Calu3 (cell line): ENCODE measurements at regions of chr14 and their contacts with region 1.

Region 1: DNA sequence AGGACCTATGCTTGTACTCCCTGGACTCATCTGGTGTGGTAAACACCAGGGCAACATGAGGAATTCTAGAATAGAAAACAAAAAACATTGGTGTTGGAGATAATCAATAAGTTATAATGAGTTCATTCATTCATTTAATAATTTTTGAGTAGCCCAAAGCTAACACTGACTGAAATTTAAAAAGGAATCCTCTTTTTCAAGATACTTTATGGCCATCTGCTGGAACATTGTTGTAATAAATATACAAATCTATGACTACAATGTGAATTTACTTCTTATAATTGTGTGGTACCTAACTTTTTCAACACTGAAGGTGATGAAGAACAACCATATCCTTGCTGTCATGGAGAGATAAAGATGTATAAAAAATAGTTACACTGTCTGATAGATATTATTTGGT is 687.3 kb upstream of the MIS18BP1 start:
- DNase-seq: no peak
- H3K4me3 Mint-ChIP-seq: no peak overlapping the region
- H3K27ac Mint-ChIP-seq: no peak overlapping the region
- H3K4me1 Mint-ChIP-seq: no peaks in the 10 kb centered on the region
- H3K27me3 Mint-ChIP-seq: no peaks in the 10 kb centered on the region
- CTCF ChIP-seq: no peak

Region 2: GRCh38 chr14:45610318-45610717 is 330.0 kb before region 1 on chr14:
- CTCF ChIA-PET with region 1: no interaction called
- intact Hi-C with region 1: loop called (anchors 5 kb)
- DNase-seq: peak; percentile 4
- H3K4me3 Mint-ChIP-seq: no peak overlapping the region
- H3K27ac Mint-ChIP-seq: no peak overlapping the region
- H3K4me1 Mint-ChIP-seq: no peaks in the 10 kb centered on the region
- H3K27me3 Mint-ChIP-seq: no peaks in the 10 kb centered on the region
- CTCF ChIP-seq: no peak

Region 3: DNA sequence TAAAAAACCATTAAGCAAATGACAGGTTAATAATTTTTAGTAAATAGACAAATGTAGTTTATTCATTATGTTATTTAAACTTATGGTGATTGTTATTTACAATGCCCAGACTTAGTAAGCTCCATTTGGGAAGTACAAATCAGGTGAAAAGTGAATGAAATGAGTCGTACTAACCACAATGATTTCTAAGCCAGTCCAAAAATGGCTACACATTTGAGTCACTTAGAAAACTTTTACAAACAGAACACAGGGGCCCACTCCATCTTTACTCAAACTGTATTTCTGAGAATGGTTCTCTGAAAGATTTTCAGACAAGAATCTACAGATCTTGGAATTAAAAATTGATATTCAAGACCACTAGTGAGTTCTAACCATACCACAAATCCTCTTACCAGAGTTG is 34.0 kb before region 1 on chr14:
- CTCF ChIA-PET with region 1: no interaction called
- intact Hi-C with region 1: no loop called
- DNase-seq: no peak
- H3K4me3 Mint-ChIP-seq: no peak overlapping the region
- H3K27ac Mint-ChIP-seq: no peak overlapping the region
- H3K4me1 Mint-ChIP-seq: no peaks in the 10 kb centered on the region
- H3K27me3 Mint-ChIP-seq: no peaks in the 10 kb centered on the region
- CTCF ChIP-seq: no peak

Region 4: DNA sequence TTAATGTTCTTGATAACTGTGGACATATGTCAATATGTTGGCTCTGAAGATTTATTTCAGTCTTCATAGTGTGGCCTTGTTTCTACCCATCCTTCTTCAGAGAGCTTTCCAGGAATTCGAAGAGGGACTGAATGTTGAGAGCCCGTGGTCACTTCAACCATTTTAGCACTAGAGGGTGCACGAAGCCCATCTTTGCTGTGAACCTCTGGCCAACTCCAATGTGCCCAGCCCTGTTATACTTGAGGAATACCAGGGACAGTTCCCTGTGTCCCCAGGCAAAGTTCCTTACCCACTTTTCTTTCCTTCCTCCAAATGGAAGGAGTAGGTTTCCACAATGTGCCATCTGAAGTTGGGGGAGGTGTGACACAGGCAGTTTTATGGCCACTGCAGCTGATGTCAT is 107.8 kb after region 1 on chr14:
- CTCF ChIA-PET with region 1: no interaction called
- intact Hi-C with region 1: no loop called
- DNase-seq: peak; percentile 18
- H3K4me3 Mint-ChIP-seq: no peak overlapping the region
- H3K27ac Mint-ChIP-seq: no peak overlapping the region
- H3K4me1 Mint-ChIP-seq: no peaks in the 10 kb centered on the region
- H3K27me3 Mint-ChIP-seq: no peaks in the 10 kb centered on the region
- CTCF ChIP-seq: no peak